ENCODE measurements at regions of chr13 and their contacts with region 1.

Region 1: GRCh38 chr13:105878119-105878700 is 657.3 kb downstream of the EFNB2 start:
- DNase-seq: peak; percentile 93
- H3K4me3 ChIP-seq: no peak overlapping the region
- H3K27ac ChIP-seq: peak overlapping the region; percentile 35
- H3K4me1 ChIP-seq: peaks cover 12% of the 10 kb centered on the region
- H3K27me3 ChIP-seq: no peaks in the 10 kb centered on the region
- CTCF ChIP-seq: no peak
- POLR2A ChIP-seq: no peak

Region 2: DNA sequence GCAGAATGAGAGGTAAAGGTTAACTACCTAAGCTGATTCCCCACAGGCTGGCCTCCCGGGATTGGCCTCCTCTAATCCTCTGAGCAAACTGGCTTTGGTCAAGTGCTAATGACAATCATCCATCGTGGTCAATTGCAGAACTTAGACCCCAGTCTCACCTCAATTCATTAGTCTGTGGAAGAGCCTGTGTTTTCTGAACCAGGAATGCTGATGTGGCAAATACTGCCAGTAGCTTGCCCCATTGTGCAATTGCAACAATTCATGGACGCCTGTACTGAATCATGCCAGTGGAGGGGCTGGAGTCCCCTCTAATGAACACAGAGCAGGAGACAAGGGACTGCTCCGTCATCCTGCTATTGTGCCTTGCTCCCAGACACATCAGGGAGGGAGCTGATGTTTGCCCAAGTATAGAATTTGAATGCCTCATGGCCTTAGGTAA is 599.2 kb before region 1 on chr13:
- CTCF ChIA-PET with region 1: no interaction called
- POLR2A ChIA-PET with region 1: no interaction called
- dilution Hi-C with region 1: no loop called
- intact Hi-C with region 1: no loop called
- DNase-seq: no peak
- H3K4me3 ChIP-seq: no peak overlapping the region
- H3K27ac ChIP-seq: no peak overlapping the region
- H3K4me1 ChIP-seq: no peaks in the 10 kb centered on the region
- H3K27me3 ChIP-seq: no peaks in the 10 kb centered on the region
- CTCF ChIP-seq: no peak
- POLR2A ChIP-seq: no peak

Region 3: GRCh38 chr13:105627270-105627669 is 250.9 kb before region 1 on chr13:
- CTCF ChIA-PET with region 1: no interaction called
- POLR2A ChIA-PET with region 1: no interaction called
- dilution Hi-C with region 1: no loop called
- intact Hi-C with region 1: loop called (anchors 5 kb)
- DNase-seq: no peak
- H3K4me3 ChIP-seq: no peak overlapping the region
- H3K27ac ChIP-seq: no peak overlapping the region
- H3K4me1 ChIP-seq: no peaks in the 10 kb centered on the region
- H3K27me3 ChIP-seq: no peaks in the 10 kb centered on the region
- CTCF ChIP-seq: no peak
- POLR2A ChIP-seq: no peak

Region 4: DNA sequence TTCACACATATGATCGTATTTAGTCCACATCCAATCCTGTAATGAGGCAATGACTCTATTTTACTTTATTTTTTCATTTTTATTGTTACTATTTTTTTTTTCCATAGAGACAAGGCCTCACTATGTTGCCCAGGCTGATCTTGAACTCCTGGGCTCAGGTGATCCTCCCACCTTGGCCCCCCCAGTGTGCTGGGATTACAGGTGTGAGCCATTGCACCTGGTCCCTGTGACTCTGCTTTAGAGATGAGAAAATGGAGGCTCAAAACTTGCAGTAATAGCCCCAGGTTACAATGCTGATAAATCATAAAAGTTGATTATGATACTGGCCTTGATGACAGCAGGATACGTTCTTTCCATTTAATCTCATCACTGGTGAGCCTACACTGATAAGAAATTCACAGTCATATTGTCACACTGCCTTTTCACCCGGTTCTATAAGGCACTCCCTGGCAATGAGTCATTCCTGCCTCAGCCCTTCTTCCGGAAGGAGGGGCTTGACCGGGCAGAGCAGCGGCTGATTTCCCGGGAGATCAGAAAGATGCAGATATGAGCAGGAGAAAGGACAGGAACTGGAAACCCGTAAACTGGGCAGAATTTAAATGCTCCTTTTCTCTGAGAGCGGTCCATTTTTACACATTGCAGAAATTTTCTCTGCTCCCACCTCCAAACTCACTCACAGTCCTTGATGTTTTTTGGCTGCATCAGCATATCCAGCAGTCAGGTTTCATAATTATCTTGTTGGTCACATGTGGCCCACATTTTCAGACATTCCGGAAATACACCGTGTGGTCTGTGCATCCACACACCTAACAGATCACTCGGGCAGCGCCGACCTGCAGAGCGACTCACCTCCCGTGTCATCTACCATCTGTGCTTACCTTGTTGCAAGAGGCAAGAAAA is 40.9 kb after region 1 on chr13:
- CTCF ChIA-PET with region 1: no interaction called
- POLR2A ChIA-PET with region 1: no interaction called
- dilution Hi-C with region 1: no loop called
- intact Hi-C with region 1: loop called (anchors 5 kb)
- DNase-seq: peak; percentile 42
- H3K4me3 ChIP-seq: no peak overlapping the region
- H3K27ac ChIP-seq: no peak overlapping the region
- H3K4me1 ChIP-seq: peaks cover 15% of the 10 kb centered on the region
- H3K27me3 ChIP-seq: no peaks in the 10 kb centered on the region
- CTCF ChIP-seq: no peak
- POLR2A ChIP-seq: no peak